Endothelial cell of umbilical vein (primary cell): ENCODE measurements at regions of chr10 and their contacts with region 1.

Region 1: DNA sequence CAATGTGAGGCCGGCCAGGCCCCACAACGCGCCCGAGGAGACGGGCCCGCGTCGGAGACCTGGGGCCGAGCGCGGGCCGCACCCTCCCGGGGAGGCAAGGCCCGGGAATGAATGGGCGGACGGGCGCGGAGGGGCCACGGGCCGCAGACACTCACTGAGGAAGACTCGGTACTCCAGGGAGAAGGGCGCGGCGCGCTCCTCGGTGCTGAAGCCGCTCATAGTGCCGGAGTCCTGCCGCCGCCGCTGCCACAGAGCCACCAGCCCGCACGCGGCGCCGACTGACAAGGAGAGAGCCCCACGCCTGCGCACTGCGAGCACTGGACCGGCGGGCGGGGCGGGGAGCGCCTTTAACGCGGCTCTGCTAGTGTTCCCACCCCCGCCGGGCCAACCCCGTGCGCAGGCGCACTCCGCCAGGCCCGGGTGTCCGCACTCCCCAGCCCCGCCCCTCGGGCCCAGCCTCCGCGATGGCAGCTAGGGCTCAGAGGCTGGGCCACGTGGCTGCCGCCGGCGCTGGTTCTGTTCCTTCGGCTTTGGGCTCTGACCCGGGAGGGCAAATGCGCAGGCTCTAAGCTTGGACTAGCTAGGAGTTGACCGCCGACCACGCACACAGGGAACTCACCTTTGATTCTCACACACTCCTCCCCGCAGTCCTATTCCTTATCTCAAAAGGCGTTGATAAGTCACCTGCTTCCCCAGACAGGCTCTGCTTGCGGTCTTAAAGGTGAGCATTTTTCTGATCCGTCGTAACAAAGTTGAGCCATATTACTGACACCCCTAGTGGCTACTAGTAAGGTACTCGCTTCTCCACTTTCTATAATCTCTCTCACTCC is at the start of gene PPA1:
- DNase-seq: peak; percentile 96
- H3K4me3 ChIP-seq: peak within 1 kb of the TSS; percentile 72 to 91 (median 80)
- H3K27ac ChIP-seq: peak within 1 kb of the TSS; percentile 58
- H3K4me1 ChIP-seq: peaks cover 11% of the 10 kb centered on the region
- H3K27me3 ChIP-seq: no peaks in the 10 kb centered on the region
- CTCF ChIP-seq: peak in 1 of 2 donors; percentile 9
- POLR2A ChIP-seq: peak; percentile 95
- total RNA-seq, gene PPA1: 115 and 140 TPM in 2 replicates

Region 2: DNA sequence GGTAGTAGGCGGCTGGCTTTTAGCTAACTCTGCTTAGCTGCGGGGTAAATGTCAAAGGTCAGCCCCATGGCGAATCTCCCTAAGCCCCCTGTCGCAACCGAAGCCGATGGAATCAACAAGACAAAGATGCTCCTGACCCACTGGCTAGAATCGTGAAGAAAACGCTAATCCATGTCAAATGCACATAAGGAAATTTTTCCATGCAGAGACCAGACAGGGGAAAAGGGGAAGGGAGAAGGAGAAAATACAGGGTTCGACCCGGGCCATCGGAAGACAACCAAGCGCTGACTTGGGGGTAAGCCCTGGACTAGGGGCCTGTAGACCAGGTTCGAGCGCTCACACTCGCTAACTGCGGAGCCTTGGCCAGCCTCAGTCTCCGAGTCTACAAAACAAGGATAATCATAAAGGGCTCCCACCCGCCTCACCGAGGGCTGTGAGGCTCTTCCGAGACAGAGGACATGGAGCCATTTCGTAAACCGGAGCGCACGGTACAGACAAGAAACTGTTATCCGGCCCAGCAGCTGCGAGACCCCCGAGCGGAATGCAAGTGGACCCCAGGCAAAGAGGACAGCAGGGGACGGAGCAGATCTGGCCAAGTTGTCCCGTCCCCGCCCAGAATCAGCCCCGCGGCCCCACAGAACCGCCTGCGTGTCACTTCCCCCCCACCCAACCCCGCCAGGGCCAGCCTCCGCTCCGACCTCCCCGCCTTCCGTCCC is 63.5 kb before region 1 on chr10:
- CTCF ChIA-PET with region 1: no interaction called
- POLR2A ChIA-PET with region 1: interaction called, 6 read pairs
- dilution Hi-C with region 1: no loop called
- intact Hi-C with region 1: loop called (anchors 1 kb)
- DNase-seq: peak; percentile 50
- H3K4me3 ChIP-seq: peak overlapping the region; percentile 72 to 96 (median 85)
- H3K27ac ChIP-seq: peak overlapping the region; percentile 90
- H3K4me1 ChIP-seq: peaks cover 20% of the 10 kb centered on the region
- H3K27me3 ChIP-seq: no peaks in the 10 kb centered on the region
- CTCF ChIP-seq: no peak
- POLR2A ChIP-seq: no peak

Region 3: DNA sequence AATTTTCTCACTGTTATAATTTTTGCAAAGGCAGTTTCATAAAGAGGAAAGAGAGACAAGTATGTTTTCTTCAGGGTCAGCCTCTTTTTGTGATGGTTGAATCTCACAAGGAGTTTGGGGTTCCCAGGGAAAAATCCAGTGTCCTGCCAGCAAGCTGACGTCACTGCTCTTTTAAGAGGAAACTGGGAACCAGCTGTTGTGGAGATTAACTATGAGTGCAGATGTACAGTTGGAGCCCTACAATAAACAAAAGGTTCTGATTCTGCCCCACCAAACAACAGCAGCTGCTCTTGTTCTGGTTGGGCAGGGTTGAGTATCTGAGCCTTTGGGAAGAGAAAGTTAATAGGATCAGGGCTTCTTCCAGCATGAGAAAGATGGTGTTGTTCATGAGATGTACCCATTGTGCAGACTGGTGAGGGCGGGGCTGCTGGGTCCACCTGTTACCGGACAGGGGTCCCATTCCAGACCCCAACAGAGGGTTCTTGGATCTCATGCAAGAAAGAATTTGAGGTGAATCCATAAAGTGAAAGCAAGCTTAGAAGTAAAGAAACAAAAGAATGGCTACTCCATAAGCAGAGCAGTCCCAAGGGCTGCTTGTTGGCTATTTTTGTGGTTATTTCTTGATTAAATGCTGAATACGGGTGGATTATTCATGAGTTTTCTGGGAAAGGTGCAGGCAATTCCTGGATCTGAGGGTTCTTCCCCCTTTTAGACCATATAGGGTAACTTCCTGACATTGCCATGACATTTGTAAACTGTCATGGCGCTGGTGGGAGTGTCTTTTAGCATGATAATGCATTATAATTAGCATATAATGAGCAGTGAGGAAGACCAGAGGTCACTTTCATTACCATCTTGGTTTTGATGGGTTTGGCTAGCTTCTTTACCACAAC is 356.7 kb after region 1 on chr10:
- CTCF ChIA-PET with region 1: no interaction called
- POLR2A ChIA-PET with region 1: no interaction called
- dilution Hi-C with region 1: no loop called
- intact Hi-C with region 1: no loop called
- DNase-seq: no peak
- H3K4me3 ChIP-seq: no peak overlapping the region
- H3K27ac ChIP-seq: no peak overlapping the region
- H3K4me1 ChIP-seq: no peaks in the 10 kb centered on the region
- H3K27me3 ChIP-seq: peaks cover 2 to 5% of the 10 kb centered on the region in 2 experiments
- CTCF ChIP-seq: no peak
- POLR2A ChIP-seq: no peak